H1 (cell line): ENCODE measurements at regions of chr5 and their contacts with region 1.

Region 1: DNA sequence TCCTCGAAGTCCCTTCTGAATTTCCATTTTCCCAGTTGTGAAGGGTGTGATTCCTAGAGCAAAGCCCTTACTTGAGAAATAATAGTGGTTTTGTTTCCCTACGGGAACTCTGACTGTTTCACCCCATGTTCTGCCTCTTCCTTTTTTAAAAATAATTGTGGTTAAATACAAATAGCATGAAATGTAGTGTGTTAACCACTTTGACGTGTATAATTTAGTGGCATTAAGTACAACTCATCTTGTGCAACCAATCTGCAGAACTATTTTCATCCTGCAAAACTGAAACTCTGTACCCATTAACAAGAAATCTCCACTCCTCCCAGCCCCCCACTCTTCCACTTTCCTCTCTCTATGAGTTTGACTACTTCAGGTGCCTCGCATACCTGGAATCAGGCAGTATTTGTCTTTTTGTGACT is 35.6 kb upstream of the HAND1 start:
- DNase-seq: no peak
- H3K4me3 ChIP-seq: no peak overlapping the region
- H3K27ac ChIP-seq: no peak overlapping the region
- H3K4me1 ChIP-seq: peaks cover 0 to 4% (median 2%) of the 10 kb centered on the region in 4 experiments; a peak in 4 of 7 replicates
- H3K27me3 ChIP-seq: no peaks in the 10 kb centered on the region
- CTCF ChIP-seq: no peak
- EP300 ChIP-seq: no peak
- POLR2A ChIP-seq: no peak
- RAD21 ChIP-seq: no peak

Region 2: GRCh38 chr5:154345255-154345952 is 168.3 kb before region 1 on chr5:
- CTCF ChIA-PET with region 1: no interaction called
- POLR2A ChIA-PET with region 1: no interaction called
- DNase-seq: no peak
- H3K4me3 ChIP-seq: no peak overlapping the region
- H3K27ac ChIP-seq: no peak overlapping the region
- H3K4me1 ChIP-seq: no peaks in the 10 kb centered on the region
- H3K27me3 ChIP-seq: no peaks in the 10 kb centered on the region
- CTCF ChIP-seq: no peak
- EP300 ChIP-seq: no peak
- POLR2A ChIP-seq: no peak
- RAD21 ChIP-seq: no peak

Region 3: GRCh38 chr5:154421868-154422267 is 91.8 kb before region 1 on chr5:
- CTCF ChIA-PET with region 1: interaction called, 10 read pairs
- POLR2A ChIA-PET with region 1: no interaction called
- DNase-seq: no peak
- H3K4me3 ChIP-seq: no peak overlapping the region
- H3K27ac ChIP-seq: no peak overlapping the region
- H3K4me1 ChIP-seq: peaks cover 0 to 4% (median 0%) of the 10 kb centered on the region in 4 experiments; a peak in 1 of 7 replicates
- H3K27me3 ChIP-seq: no peaks in the 10 kb centered on the region
- CTCF ChIP-seq: peak; percentile 71 to 83 (median 77)
- EP300 ChIP-seq: no peak
- POLR2A ChIP-seq: no peak
- RAD21 ChIP-seq: peak; percentile 87 to 88

Region 4: DNA sequence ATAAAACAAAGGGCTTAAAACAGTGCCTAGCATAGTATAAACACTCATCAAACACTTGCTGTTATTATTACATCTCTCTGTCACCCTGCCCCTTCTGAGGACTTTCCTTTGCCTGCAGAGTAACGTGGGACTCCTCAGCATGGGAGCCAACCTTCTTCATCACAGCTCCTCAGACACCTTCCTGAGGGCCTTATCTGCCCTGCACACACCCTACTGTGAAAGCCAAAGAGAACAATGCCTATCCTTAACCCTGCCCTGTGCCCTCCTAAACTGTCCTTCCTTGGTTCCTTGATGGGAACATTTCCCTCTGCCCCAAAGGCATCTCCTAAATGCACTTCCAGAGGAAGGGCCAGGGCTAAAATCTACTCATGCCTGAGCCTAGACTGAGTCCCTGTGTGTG is 15.1 kb before region 1 on chr5:
- CTCF ChIA-PET with region 1: interaction called, 87 read pairs
- POLR2A ChIA-PET with region 1: no interaction called
- DNase-seq: no peak
- H3K4me3 ChIP-seq: no peak overlapping the region
- H3K27ac ChIP-seq: no peak overlapping the region
- H3K4me1 ChIP-seq: no peaks in the 10 kb centered on the region
- H3K27me3 ChIP-seq: no peaks in the 10 kb centered on the region; a peak in 1 of 7 replicates
- CTCF ChIP-seq: no peak
- EP300 ChIP-seq: no peak
- POLR2A ChIP-seq: no peak
- RAD21 ChIP-seq: no peak